ENCODE measurements at regions of chr9 and their contacts with region 1.

Region 1: GRCh38 chr9:128947422-128948301 is at the starts of genes DOLK and NUP188:
- DNase-seq: peak; percentile 85 to 91 (median 90)
- H3K4me3 ChIP-seq: peak within 1 kb of the TSS; percentile 89 to 99 (median 89)
- H3K4me3 Mint-ChIP-seq: peak within 1 kb of the TSS; percentile 93 to 98
- H3K27ac ChIP-seq: peak within 1 kb of the TSS; percentile 83 to 91
- H3K27ac Mint-ChIP-seq: peak within 1 kb of the TSS; percentile 93 to 98 (median 96)
- H3K4me1 ChIP-seq: peaks cover 12 to 20% of the 10 kb centered on the region in 2 donors
- H3K4me1 Mint-ChIP-seq: peaks cover 18% of the 10 kb centered on the region
- H3K27me3 ChIP-seq: no peaks in the 10 kb centered on the region
- H3K27me3 Mint-ChIP-seq: peaks cover 0 to 4% (median 2%) of the 10 kb centered on the region in 3 donors
- CTCF ChIP-seq: no peak
- polyA plus RNA-seq, gene DOLK: 0.76 to 8.5 (median 7.0) TPM
- polyA plus RNA-seq, gene NUP188: 10.5 to 28.2 (median 17.2) TPM

Region 2: GRCh38 chr9:128723866-128724743 is 223.6 kb before region 1 on chr9 and contains the start of gene ZDHHC12:
- intact Hi-C with region 1: loop called in 1 of 2 experiments (anchors 10 kb)
- DNase-seq: peak; percentile 92 to 95 (median 95)
- H3K4me3 ChIP-seq: peak within 1 kb of the TSS; percentile 80 to 96 (median 91)
- H3K4me3 Mint-ChIP-seq: peak within 1 kb of the TSS; percentile 90 to 98
- H3K27ac ChIP-seq: peak within 1 kb of the TSS; percentile 2 to 78
- H3K27ac Mint-ChIP-seq: peak within 1 kb of the TSS; percentile 77 to 95 (median 85)
- H3K4me1 ChIP-seq: peaks cover 15 to 23% of the 10 kb centered on the region in 2 donors
- H3K4me1 Mint-ChIP-seq: peaks cover 27% of the 10 kb centered on the region
- H3K27me3 ChIP-seq: no peaks in the 10 kb centered on the region
- H3K27me3 Mint-ChIP-seq: peaks cover 0 to 3% (median 2%) of the 10 kb centered on the region in 3 donors
- CTCF ChIP-seq: no peak
- polyA plus RNA-seq, gene ZDHHC12: 50.0 to 72.7 (median 68.4) TPM

Region 3: GRCh38 chr9:128881901-128882681 is 65.6 kb before region 1 on chr9 and contains the starts of genes KYAT1 and LRRC8A:
- intact Hi-C with region 1: loop called in 1 of 2 experiments (anchors 10 kb)
- DNase-seq: peak; percentile 94 to 97 (median 95)
- H3K4me3 ChIP-seq: peak within 1 kb of the TSS; percentile 75 to 99 (median 89)
- H3K4me3 Mint-ChIP-seq: peak within 1 kb of the TSS; percentile 94 to 98
- H3K27ac ChIP-seq: peak within 1 kb of the TSS; percentile 27 to 84
- H3K27ac Mint-ChIP-seq: peak within 1 kb of the TSS; percentile 84 to 96 (median 90)
- H3K4me1 ChIP-seq: peaks cover 16 to 21% of the 10 kb centered on the region in 2 donors
- H3K4me1 Mint-ChIP-seq: peaks cover 27% of the 10 kb centered on the region
- H3K27me3 ChIP-seq: no peaks in the 10 kb centered on the region
- H3K27me3 Mint-ChIP-seq: peaks cover 0 to 1% (median 0%) of the 10 kb centered on the region in 3 donors
- CTCF ChIP-seq: no peak
- polyA plus RNA-seq, gene KYAT1: 2.4 to 4.5 (median 3.6) TPM
- polyA plus RNA-seq, gene LRRC8A: 7.8 to 10.8 (median 10.3) TPM

Region 4: DNA sequence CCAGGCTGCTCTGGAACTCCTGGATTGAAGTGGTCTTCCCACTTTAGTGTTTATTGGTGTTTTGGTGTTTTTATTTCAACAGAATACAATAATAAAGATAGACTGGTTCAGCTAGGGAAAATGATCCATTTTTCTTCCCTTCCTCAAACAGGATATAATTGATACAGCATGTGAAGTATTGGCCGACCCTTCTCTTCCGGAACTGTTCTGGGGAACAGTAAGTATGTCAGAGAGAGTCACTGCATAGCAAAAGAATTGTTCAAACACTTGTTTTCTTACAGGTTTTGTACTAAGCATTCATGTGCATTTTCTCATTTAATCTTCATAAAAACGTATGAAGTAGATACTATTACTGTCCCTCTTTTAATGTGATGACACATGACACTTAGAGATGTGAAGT is 31.4 kb after region 1 on chr9:
- intact Hi-C with region 1: no loop called
- DNase-seq: no peak
- H3K4me3 ChIP-seq: no peak overlapping the region
- H3K4me3 Mint-ChIP-seq: no peak overlapping the region
- H3K27ac ChIP-seq: no peak overlapping the region
- H3K27ac Mint-ChIP-seq: no peak overlapping the region
- H3K4me1 ChIP-seq: no peaks in the 10 kb centered on the region
- H3K4me1 Mint-ChIP-seq: no peaks in the 10 kb centered on the region
- H3K27me3 ChIP-seq: no peaks in the 10 kb centered on the region
- H3K27me3 Mint-ChIP-seq: peaks cover 0 to 1% (median 0%) of the 10 kb centered on the region in 3 donors
- CTCF ChIP-seq: no peak

Region 5: GRCh38 chr9:129028192-129028957 is 80.7 kb after region 1 on chr9 and contains the start of gene SH3GLB2:
- intact Hi-C with region 1: loop called in 1 of 2 experiments (anchors 5 kb)
- DNase-seq: peak; percentile 92 to 97 (median 95)
- H3K4me3 ChIP-seq: peak within 1 kb of the TSS; percentile 47 to 78 (median 65)
- H3K4me3 Mint-ChIP-seq: peak within 1 kb of the TSS; percentile 71 to 85
- H3K27ac ChIP-seq: no peak within 1 kb of the TSS
- H3K27ac Mint-ChIP-seq: peak within 1 kb of the TSS in 1 of 7 donors; percentile 26
- H3K4me1 ChIP-seq: peaks cover 12 to 24% of the 10 kb centered on the region in 2 donors
- H3K4me1 Mint-ChIP-seq: peaks cover 20% of the 10 kb centered on the region
- H3K27me3 ChIP-seq: no peaks in the 10 kb centered on the region
- H3K27me3 Mint-ChIP-seq: no peaks in the 10 kb centered on the region
- CTCF ChIP-seq: peak; percentile 83
- polyA plus RNA-seq, gene SH3GLB2: 8.0 to 77.0 (median 25.9) TPM

Measured in CD14-positive monocyte (primary cell).